ENCODE measurements at regions of chr13 and their contacts with region 1.

Region 1: DNA sequence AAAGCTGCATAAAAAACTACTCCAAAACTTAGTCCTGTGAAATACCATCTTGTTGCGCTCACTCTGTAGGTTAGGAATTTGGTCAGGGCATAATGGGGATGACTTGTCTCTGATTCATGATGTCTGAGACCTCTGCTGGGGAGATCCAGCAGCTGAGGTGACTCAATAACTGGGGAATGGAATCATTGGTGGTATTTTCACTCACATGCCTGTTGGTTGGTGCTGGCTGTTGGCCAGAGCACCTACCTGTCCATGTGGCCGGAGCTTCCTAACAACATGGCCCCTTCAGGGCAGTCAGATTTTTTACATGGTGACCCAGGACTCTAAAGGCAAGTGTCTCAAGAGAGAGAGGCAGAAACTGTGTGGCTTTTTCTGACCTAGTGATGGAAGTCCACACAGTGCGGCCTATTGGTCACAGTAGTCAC is 7.4 kb upstream of the ESD start:
- DNase-seq: no peak
- ATAC-seq: no peak
- H3K4me3 ChIP-seq: no peak overlapping the region
- H3K27ac ChIP-seq: no peak overlapping the region
- H3K4me1 ChIP-seq: no peaks in the 10 kb centered on the region
- H3K27me3 ChIP-seq: peaks cover 0 to 3% (median 0%) of the 10 kb centered on the region in 9 donors
- CTCF ChIP-seq: no peak
- POLR2A ChIP-seq: no peak

Region 2: GRCh38 chr13:45602183-45603170 is 1201.9 kb before region 1 on chr13:
- intact Hi-C with region 1: no loop called
- DNase-seq: no peak
- ATAC-seq: no peak
- H3K4me3 ChIP-seq: no peak overlapping the region
- H3K27ac ChIP-seq: no peak overlapping the region
- H3K4me1 ChIP-seq: no peaks in the 10 kb centered on the region
- H3K27me3 ChIP-seq: peaks cover 0 to 9% (median 0%) of the 10 kb centered on the region in 9 donors
- CTCF ChIP-seq: no peak
- POLR2A ChIP-seq: no peak

Region 3: DNA sequence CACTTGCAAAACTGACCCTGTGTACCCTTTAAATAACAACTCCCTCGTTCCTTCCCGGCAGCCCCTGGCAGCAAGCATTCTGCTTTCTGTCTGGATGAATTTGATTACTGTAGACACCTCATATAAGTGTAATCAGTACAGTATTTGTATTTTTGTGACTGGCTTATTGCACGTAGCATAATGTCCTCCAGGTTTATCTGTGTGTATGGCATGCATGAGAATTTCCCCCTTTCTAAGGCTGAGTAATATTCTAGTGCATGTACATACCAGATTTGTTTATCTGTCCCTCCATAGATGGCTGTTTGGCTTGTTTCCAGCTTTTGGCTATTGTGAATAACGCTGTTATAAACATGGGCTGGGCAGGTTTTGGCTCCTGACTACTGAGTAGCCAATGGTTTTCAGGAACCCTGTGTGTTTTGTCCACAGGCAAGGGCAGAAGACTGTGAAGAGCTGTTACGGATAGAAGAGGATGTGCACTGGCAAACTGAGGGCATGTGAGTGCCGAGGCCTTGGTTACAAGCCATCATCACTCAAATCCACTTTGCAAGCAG is 105.4 kb before region 1 on chr13:
- intact Hi-C with region 1: no loop called
- DNase-seq: peak in 1 of 5 donors; percentile 21
- ATAC-seq: peak; percentile 62 to 71 (median 66)
- H3K4me3 ChIP-seq: no peak overlapping the region
- H3K27ac ChIP-seq: peak overlapping the region in 4 of 12 donors; percentile 4 to 52 (median 32)
- H3K4me1 ChIP-seq: peaks cover 0 to 22% (median 15%) of the 10 kb centered on the region in 12 donors
- H3K27me3 ChIP-seq: no peaks in the 10 kb centered on the region
- CTCF ChIP-seq: no peak
- POLR2A ChIP-seq: no peak

Region 4: DNA sequence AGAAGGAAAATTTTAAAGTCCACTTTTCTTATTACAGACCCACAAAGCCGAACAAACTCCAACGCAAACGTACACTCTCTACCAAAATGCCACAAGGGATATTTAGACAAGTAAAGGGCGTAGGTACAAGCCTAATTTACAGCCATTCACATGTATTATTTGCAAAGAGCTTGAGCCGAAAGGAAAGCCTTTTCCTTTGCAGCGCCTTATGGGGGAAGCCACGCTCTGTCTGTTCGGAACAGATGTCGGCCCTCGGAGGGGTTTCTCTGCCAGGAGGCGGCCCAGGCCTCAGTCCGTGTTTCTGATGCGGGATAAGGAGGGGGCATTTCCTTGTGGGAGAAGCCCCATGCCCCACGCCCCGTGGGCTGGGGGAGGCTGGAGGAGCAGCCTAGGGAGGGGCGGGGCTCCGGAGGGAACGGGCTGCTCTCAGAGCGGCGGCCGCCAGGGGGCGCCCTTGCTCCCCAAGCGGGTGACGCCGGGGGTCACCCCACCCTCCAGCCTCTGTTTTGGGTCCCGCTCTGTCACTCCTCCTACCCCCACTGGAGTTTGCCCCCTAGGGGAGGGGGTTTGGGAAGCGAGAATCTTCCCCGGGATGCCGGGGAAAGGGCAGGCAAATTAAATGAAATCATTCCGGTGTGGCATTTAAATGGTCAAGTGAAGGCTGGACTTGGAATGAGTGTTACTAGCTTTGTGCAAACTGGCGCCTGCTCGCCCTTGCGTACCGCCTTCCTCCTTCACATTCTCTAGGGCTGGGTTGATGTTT is 89.6 kb after region 1 on chr13:
- intact Hi-C with region 1: loop called in 1 of 10 experiments (anchors 5 kb)
- DNase-seq: peak; percentile 47 to 81 (median 57)
- ATAC-seq: peak; percentile 83 to 96 (median 93)
- H3K4me3 ChIP-seq: peak overlapping the region; percentile 13 to 68 (median 57)
- H3K27ac ChIP-seq: peak overlapping the region in 4 of 12 donors; percentile 0 to 47 (median 22)
- H3K4me1 ChIP-seq: peaks cover 0 to 23% (median 1%) of the 10 kb centered on the region in 12 donors
- H3K27me3 ChIP-seq: peaks cover 0 to 19% (median 4%) of the 10 kb centered on the region in 9 donors
- CTCF ChIP-seq: peak; percentile 88 to 99 (median 94)
- POLR2A ChIP-seq: no peak

Region 5: DNA sequence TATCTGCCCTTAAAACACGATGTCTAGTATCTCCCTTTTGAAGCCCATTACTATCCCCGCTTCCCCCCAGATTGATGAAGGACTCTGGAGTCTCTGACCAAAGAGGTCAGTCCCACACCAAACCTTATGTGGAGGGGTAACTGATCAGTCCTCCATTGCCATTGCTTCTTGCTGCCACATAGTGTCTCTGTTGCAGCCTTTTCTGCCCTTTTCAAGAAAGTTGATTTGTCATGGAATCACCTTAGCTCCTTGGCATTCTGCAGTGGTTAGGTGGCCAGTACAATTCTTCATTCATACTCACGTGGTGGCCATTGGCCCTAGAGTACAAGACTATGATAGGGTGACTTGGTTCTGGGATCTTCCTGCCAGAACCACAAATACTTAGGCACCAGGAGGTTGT is 100.8 kb after region 1 on chr13:
- intact Hi-C with region 1: no loop called
- DNase-seq: no peak
- ATAC-seq: no peak
- H3K4me3 ChIP-seq: no peak overlapping the region
- H3K27ac ChIP-seq: no peak overlapping the region
- H3K4me1 ChIP-seq: no peaks in the 10 kb centered on the region
- H3K27me3 ChIP-seq: no peaks in the 10 kb centered on the region
- CTCF ChIP-seq: no peak
- POLR2A ChIP-seq: no peak